PC-3 (cell line): ENCODE measurements at regions of chr10 and their contacts with region 1.

Region 1: DNA sequence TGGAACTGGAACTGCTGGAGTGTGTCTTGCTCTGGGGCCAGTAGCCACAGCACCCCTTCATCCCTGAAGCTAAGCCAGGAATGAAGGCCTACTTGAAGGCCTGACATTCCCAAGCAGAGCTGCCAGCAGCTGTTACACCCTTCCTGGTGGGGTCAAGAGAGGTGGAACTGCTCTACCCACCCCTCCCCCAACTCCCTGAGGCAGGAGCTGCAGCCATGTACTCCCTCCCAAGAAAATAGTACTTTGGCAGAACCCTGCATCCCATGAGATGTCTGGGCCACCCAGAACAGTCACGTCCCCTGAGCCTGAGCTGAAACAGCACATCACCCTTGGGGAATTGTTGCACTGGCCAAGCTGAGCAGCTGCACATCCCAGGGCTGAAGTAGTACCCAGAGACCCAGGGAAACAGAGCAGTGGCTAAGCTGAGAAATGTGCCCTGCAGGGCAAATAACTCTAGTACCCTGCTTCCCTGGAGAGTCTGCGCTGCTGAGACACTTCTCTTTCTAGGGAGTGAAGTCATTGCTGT is 63.4 kb upstream of the PLA2G12B start:
- DNase-seq: no peak
- ATAC-seq: no peak
- H3K4me3 ChIP-seq: no peak overlapping the region
- H3K27ac ChIP-seq: no peak overlapping the region
- H3K4me1 ChIP-seq: peaks cover 14% of the 10 kb centered on the region
- H3K27me3 ChIP-seq: no peaks in the 10 kb centered on the region
- CTCF ChIP-seq: no peak

Region 2: DNA sequence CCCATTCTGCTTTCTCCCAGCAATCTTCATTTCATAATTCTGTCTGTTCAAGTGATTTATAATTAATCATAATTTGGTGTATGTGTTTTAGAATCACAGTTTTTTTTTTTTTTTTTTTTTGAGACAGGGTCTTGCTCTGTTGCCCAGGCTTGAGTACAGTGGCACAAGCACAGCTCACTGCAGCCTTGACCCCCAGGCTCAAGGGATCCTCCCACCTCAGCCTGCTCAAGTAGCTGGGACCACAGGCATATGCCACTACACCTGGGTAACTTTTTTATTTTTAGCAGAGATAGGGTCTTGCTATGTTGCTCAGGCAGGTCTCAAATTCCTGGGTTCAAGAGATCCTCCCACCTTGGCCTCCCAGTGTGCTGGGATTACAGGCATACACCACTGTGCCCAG is 14.2 kb before region 1 on chr10:
- CTCF ChIA-PET with region 1: no interaction called
- POLR2A ChIA-PET with region 1: interaction called, 45 read pairs
- intact Hi-C with region 1: no loop called
- DNase-seq: no peak
- ATAC-seq: no peak
- H3K4me3 ChIP-seq: no peak overlapping the region
- H3K27ac ChIP-seq: no peak overlapping the region
- H3K4me1 ChIP-seq: no peaks in the 10 kb centered on the region
- H3K27me3 ChIP-seq: no peaks in the 10 kb centered on the region
- CTCF ChIP-seq: no peak

Region 3: DNA sequence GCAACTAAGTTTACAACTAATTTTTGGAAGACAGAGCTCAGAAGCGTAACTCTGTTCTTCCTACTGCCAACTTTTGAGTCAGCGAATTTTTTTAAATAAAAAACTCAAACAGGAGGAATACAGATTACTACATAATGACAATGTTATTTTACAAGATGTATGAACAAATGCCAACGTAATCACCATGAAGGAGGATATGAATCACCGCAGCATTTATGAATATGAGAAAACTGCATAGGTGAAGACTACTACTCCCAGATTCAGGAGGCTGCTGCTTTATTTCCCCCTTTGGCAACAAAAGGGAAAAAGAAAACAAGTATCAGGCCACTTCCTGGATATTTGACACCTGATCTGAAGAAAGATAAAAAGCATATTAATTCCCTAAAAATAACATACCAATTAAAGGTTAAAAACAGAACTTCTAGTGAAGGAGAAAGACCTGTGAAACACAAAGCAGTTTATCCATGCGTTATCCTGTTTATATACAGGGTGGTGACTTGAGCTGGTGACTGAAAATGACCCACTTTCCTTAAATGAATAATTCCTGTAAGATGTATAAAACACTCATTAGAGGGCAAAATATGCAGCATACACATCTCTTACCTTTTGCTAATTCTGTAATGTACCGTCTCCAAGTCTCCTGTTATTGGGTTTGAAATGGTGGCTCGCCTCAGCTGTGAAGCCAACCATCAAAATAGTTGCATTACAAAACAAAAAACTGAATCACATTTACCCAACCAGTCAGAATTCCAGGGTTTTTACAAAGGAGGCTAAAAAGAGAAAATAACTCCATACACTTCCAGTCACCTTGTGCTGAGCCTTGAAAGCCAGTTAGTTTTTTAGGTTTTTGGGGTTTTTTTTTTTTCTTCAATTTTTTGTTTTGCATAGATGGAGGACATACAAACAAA is 26.6 kb after region 1 on chr10:
- CTCF ChIA-PET with region 1: interaction called, 7 read pairs
- POLR2A ChIA-PET with region 1: interaction called, 5 read pairs
- intact Hi-C with region 1: loop called (anchors 2 kb)
- DNase-seq: peak; percentile 100
- ATAC-seq: peak; percentile 86
- H3K4me3 ChIP-seq: peak overlapping the region; percentile 30
- H3K27ac ChIP-seq: peak overlapping the region; percentile 77
- H3K4me1 ChIP-seq: peaks cover 70% of the 10 kb centered on the region
- H3K27me3 ChIP-seq: no peaks in the 10 kb centered on the region
- CTCF ChIP-seq: no peak

Region 4: DNA sequence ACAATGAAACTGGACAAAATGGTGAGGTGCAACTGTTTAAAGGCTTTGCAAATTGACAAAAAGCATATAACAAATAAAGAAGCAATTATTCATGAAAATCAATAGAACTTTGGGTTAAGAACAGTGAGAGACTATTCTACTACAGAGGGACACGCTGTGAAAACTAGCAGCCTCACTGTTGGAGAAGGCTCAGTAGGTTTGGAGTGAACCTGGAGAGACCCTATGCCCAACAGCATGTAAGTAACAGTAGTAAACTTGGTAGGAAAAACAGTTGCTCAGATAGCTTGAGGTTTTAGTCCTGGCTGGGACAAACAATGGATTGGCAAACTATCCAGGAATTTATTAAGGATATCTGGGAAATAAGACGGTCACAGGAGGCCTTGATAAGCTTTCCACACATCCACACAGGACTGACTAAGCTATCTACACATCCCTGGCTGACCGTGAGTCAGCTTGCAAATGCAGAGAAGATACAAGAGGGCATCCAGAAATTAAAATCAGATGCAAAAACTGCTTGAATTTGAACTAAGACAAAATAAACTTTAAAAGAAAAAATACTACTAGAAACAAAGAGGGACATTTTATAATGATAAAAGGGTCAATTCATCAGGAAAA is 165.8 kb after region 1 on chr10:
- CTCF ChIA-PET with region 1: interaction called, 10 read pairs
- POLR2A ChIA-PET with region 1: no interaction called
- intact Hi-C with region 1: no loop called
- DNase-seq: no peak
- ATAC-seq: no peak
- H3K4me3 ChIP-seq: no peak overlapping the region
- H3K27ac ChIP-seq: no peak overlapping the region
- H3K4me1 ChIP-seq: no peaks in the 10 kb centered on the region
- H3K27me3 ChIP-seq: no peaks in the 10 kb centered on the region
- CTCF ChIP-seq: no peak